Vagina (tissue), 2 donors: ENCODE measurements at regions of chr2 and their contacts with region 1.

Region 1: GRCh38 chr2:198309673-198310280 is 505.4 kb downstream of the PLCL1 start:
- DNase-seq: no peak
- H3K4me3 ChIP-seq: no peak overlapping the region
- H3K27ac ChIP-seq: no peak overlapping the region
- H3K4me1 ChIP-seq: no peaks in the 10 kb centered on the region
- H3K27me3 ChIP-seq: no peaks in the 10 kb centered on the region
- CTCF ChIP-seq: peak; percentile 22 to 78 (median 26)
- POLR2A ChIP-seq: no peak

Region 2: GRCh38 chr2:198251102-198251501 is 58.7 kb before region 1 on chr2:
- intact Hi-C with region 1: no loop called
- DNase-seq: no peak
- H3K4me3 ChIP-seq: no peak overlapping the region
- H3K27ac ChIP-seq: no peak overlapping the region
- H3K4me1 ChIP-seq: no peaks in the 10 kb centered on the region
- H3K27me3 ChIP-seq: no peaks in the 10 kb centered on the region
- CTCF ChIP-seq: no peak
- POLR2A ChIP-seq: no peak

Region 3: DNA sequence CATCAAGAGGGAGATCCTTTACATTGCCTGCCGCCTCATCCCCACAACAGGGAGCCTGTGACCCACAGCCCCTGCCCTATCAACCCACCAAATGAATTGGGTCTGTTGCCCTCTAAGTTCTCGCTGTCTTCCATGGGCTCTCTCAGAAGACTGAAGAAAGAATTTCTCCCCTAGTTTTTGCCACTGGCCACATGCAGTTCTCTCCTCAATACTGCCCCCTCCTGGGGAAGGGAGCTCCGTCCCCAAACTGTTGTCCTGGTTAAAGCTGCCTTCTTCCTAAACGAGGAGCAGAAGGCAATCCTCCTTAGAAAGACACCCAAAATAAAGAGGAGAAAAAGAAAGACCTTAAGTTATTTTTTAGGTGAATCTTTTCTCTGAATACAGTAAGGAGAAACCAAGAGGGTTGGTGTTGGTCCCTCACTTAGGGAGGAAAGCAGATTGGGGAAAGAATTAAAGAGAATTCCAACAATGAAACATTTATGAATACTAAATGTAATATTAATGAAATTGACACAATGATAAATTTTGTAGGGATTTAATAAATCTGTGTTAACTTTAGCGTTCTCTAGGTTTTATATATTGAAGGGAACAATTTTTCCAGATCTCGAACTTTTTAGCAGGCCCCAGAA is 1179.1 kb after region 1 on chr2:
- intact Hi-C with region 1: loop called (anchors 10 kb)
- DNase-seq: peak in 1 of 2 donors; percentile 44
- H3K4me3 ChIP-seq: no peak overlapping the region
- H3K27ac ChIP-seq: no peak overlapping the region
- H3K4me1 ChIP-seq: no peaks in the 10 kb centered on the region
- H3K27me3 ChIP-seq: no peaks in the 10 kb centered on the region
- CTCF ChIP-seq: peak in 2 of 3 experiments; percentile 32 to 41
- POLR2A ChIP-seq: no peak

Region 4: GRCh38 chr2:199739413-199740110 is 1429.8 kb after region 1 on chr2:
- intact Hi-C with region 1: loop called (anchors 10 kb)
- DNase-seq: no peak
- H3K4me3 ChIP-seq: no peak overlapping the region
- H3K27ac ChIP-seq: peak overlapping the region; percentile 22
- H3K4me1 ChIP-seq: peaks cover 26% of the 10 kb centered on the region
- H3K27me3 ChIP-seq: no peaks in the 10 kb centered on the region
- CTCF ChIP-seq: peak; percentile 80 to 90 (median 89)
- POLR2A ChIP-seq: no peak